ENCODE measurements at regions of chr17 and their contacts with region 1.

Region 1: DNA sequence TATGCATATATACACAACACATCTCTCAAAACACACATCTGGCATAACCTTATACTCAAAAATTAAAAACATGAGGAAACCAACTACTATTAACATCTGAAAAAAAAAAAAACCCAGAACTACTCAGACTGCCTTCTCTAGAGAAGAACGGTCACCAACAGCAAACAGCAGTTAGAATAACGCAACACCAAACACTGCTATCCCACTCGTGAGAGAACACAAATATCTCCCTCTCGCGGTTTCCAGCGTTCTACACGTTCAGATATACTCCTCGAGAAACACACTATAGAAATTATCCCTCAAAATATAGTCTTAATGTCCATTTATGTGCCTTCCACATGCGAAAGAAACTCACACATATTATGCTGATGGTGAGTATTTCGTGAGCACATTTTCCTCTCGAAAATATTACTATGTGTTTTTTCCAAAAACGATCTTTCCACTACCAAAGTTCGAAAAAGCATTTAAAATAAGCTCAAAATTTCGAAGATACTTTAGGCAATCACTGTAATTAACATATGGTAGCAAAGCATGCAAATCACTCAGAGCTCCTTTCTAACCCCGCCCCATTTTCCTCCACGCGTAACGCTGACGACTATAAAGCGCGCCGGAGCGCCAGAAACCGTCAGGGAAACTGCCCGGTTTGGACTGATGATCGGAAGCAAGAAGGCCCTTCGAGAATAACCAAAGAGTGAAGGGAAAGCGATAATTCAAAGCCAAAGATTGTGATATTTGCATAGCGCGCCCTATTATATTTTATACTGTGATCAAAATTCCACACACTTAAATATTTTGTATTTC is 60.1 kb downstream of the TEX14 start:
- DNase-seq: peak; percentile 98
- H3K4me3 ChIP-seq: peak overlapping the region in 6 of 7 experiments; percentile 52 to 75 (median 64)
- H3K27ac ChIP-seq: peak overlapping the region; percentile 99 to 100
- H3K4me1 ChIP-seq: peaks cover 0 to 21% (median 13%) of the 10 kb centered on the region in 4 experiments
- H3K27me3 ChIP-seq: no peaks in the 10 kb centered on the region

Region 2: GRCh38 chr17:58517734-58518609 is 113.8 kb before region 1 on chr17:
- CTCF ChIA-PET with region 1: interaction called, 7 read pairs
- POLR2A ChIA-PET with region 1: interaction called, 49 read pairs
- DNase-seq: peak; percentile 100
- H3K4me3 ChIP-seq: peak overlapping the region; percentile 89 to 99 (median 97)
- H3K27ac ChIP-seq: peak overlapping the region; percentile 90 to 94
- H3K4me1 ChIP-seq: peaks cover 11 to 38% (median 33%) of the 10 kb centered on the region in 4 experiments
- H3K27me3 ChIP-seq: no peaks in the 10 kb centered on the region

Region 3: GRCh38 chr17:58587702-58588254 is 43.9 kb before region 1 on chr17:
- CTCF ChIA-PET with region 1: interaction called, 12 read pairs
- POLR2A ChIA-PET with region 1: interaction called, 16 read pairs
- DNase-seq: peak; percentile 52 to 67 (median 63)
- H3K4me3 ChIP-seq: no peak overlapping the region
- H3K27ac ChIP-seq: no peak overlapping the region
- H3K4me1 ChIP-seq: no peaks in the 10 kb centered on the region
- H3K27me3 ChIP-seq: no peaks in the 10 kb centered on the region

Region 4: GRCh38 chr17:58611331-58611730 is 20.4 kb before region 1 on chr17:
- CTCF ChIA-PET with region 1: interaction called, 10 read pairs
- POLR2A ChIA-PET with region 1: interaction called, 7 read pairs
- DNase-seq: no peak
- H3K4me3 ChIP-seq: no peak overlapping the region
- H3K27ac ChIP-seq: no peak overlapping the region
- H3K4me1 ChIP-seq: peaks cover 5 to 21% (median 20%) of the 10 kb centered on the region in 4 experiments
- H3K27me3 ChIP-seq: no peaks in the 10 kb centered on the region

Region 5: GRCh38 chr17:58643140-58643539 is 11.4 kb after region 1 on chr17:
- CTCF ChIA-PET with region 1: interaction called, 8 read pairs
- POLR2A ChIA-PET with region 1: interaction called, 13 read pairs
- DNase-seq: no peak
- H3K4me3 ChIP-seq: no peak overlapping the region
- H3K27ac ChIP-seq: no peak overlapping the region
- H3K4me1 ChIP-seq: no peaks in the 10 kb centered on the region
- H3K27me3 ChIP-seq: no peaks in the 10 kb centered on the region

Region 6: GRCh38 chr17:58658804-58659713 is 27.3 kb after region 1 on chr17:
- CTCF ChIA-PET with region 1: interaction called, 5 read pairs
- POLR2A ChIA-PET with region 1: interaction called, 69 read pairs
- DNase-seq: peak; percentile 97 to 99 (median 98)
- H3K4me3 ChIP-seq: peak overlapping the region in 6 of 7 experiments; percentile 57 to 76 (median 62)
- H3K27ac ChIP-seq: peak overlapping the region; percentile 99 to 100
- H3K4me1 ChIP-seq: peaks cover 0 to 7% (median 4%) of the 10 kb centered on the region in 4 experiments
- H3K27me3 ChIP-seq: no peaks in the 10 kb centered on the region

Region 7: DNA sequence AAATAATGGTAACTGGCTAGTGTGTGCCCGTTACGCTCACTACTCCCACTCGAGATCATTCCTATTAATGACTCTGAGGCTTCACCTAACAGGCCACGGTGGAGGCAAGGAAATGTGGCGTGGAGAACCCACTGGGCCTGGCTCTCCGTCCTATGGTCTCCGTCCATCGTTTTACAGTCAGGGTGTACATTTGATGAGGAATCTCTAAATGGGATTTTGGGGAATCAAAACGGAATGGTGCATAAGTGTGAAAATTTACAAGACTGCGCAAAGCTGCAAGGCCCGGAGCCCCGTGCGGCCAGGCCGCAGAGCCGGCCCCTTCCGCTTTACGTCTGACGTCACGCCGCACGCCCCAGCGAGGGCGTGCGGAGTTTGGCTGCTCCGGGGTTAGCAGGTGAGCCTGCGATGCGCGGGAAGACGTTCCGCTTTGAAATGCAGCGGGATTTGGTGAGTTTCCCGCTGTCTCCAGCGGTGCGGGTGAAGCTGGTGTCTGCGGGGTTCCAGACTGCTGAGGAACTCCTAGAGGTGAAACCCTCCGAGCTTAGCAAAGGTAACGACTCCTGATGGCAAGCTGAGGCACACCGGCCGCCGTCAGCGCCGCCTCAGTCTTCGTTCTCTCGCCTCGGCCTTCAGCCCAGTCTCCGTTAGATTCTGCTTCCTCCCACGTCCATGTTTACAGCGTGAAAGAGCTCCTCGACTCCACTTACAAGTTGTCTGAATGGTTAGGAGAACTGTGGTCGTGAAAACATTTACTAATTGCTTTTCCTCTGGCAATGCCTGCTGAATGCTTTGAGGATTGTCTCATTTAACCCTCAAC is 60.7 kb after region 1 on chr17 and contains the start of gene RAD51C:
- CTCF ChIA-PET with region 1: no interaction called
- POLR2A ChIA-PET with region 1: interaction called, 15 read pairs
- DNase-seq: peak; percentile 86 to 96 (median 93)
- H3K4me3 ChIP-seq: peak within 1 kb of the TSS; percentile 60 to 91 (median 75)
- H3K27ac ChIP-seq: peak within 1 kb of the TSS; percentile 65 to 84
- H3K4me1 ChIP-seq: peaks cover 9 to 24% (median 16%) of the 10 kb centered on the region in 4 experiments
- H3K27me3 ChIP-seq: no peaks in the 10 kb centered on the region

Measured in common myeloid progenitor, CD34-positive (primary cell).